Adrenal gland (tissue), 19 donors: ENCODE measurements at regions of chr1 and their contacts with region 1.

Region 1: GRCh38 chr1:8026153-8026975 is at the start of gene ERRFI1:
- DNase-seq: peak; percentile 93 to 97 (median 94)
- H3K4me3 ChIP-seq: peak within 1 kb of the TSS; percentile 31 to 97 (median 56)
- H3K27ac ChIP-seq: peak within 1 kb of the TSS; percentile 16 to 95 (median 84)
- H3K4me1 ChIP-seq: peaks cover 23 to 48% of the 10 kb centered on the region in 2 donors
- H3K27me3 ChIP-seq: no peaks in the 10 kb centered on the region
- CTCF ChIP-seq: peak in 1 of 6 experiments; percentile 15
- POLR2A ChIP-seq: peak; percentile 99 to 100
- total RNA-seq, gene ERRFI1: 16.0 to 71.5 (median 27.4) TPM

Region 2: DNA sequence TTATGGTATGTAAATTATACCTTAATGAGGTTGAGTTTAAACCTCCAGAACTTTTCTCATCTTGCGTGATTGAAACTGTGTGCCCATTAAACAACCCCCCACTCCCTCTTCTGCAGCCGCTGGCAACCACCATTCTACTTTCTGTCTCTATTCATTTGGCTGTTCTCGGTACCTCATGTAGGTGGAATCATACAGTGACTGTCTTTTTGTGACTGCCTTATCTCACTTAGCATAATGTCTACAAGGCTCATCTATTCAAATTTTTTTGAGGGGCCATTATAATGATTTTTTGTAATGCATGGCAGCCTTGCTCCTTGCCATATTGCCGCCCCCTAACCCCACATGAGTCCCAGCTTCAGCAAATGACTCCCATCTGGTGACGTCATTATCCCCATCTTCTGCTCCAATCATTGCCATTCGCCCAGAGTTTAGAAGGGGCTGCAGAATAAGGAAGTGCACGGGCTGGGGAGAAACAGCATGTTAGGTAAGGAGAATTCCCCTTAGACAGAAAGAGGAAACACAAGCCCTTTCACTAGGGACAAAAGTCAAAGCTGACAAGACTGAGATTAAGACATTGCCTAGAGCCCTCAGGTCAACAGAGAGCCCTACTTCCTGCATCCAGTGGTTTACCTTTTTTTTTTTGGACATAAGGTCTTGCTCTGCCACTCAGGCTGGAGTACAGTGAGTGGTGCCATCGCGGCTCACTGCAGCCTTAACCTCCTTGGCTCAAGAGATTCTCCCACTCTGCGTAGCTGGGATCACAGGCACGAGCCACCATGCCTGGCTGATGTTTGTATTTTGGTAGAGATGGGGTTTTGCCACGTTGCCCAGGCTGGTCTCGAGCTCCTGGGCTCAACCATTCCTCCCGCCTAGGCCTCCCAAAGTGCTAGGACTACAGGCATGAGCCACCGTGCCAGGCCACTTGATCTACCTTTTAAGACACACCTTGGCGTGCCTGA is 78.2 kb after region 1 on chr1:
- intact Hi-C with region 1: no loop called
- DNase-seq: no peak
- H3K4me3 ChIP-seq: no peak overlapping the region
- H3K27ac ChIP-seq: no peak overlapping the region
- H3K4me1 ChIP-seq: peaks cover 0 to 7% of the 10 kb centered on the region in 2 donors
- H3K27me3 ChIP-seq: no peaks in the 10 kb centered on the region
- CTCF ChIP-seq: no peak
- POLR2A ChIP-seq: no peak

Region 3: GRCh38 chr1:8121261-8122170 is 95.2 kb after region 1 on chr1:
- intact Hi-C with region 1: loop called in 1 of 2 experiments (anchors 10 kb)
- DNase-seq: peak; percentile 85 to 96 (median 92)
- H3K4me3 ChIP-seq: peak overlapping the region in 1 of 4 donors; percentile 0
- H3K27ac ChIP-seq: peak overlapping the region; percentile 67 to 94 (median 91)
- H3K4me1 ChIP-seq: peaks cover 22 to 24% of the 10 kb centered on the region in 2 donors
- H3K27me3 ChIP-seq: no peaks in the 10 kb centered on the region
- CTCF ChIP-seq: no peak
- POLR2A ChIP-seq: peak in 1 of 2 donors; percentile 62

Region 4: GRCh38 chr1:8211589-8212442 is 185.5 kb after region 1 on chr1:
- intact Hi-C with region 1: loop called in 1 of 2 experiments (anchors 10 kb)
- DNase-seq: peak in 6 of 7 donors; percentile 37 to 70 (median 46)
- H3K4me3 ChIP-seq: no peak overlapping the region
- H3K27ac ChIP-seq: peak overlapping the region in 2 of 5 donors; percentile 48 to 79
- H3K4me1 ChIP-seq: peaks cover 11% of the 10 kb centered on the region in 2 donors
- H3K27me3 ChIP-seq: no peaks in the 10 kb centered on the region
- CTCF ChIP-seq: no peak
- POLR2A ChIP-seq: no peak

Region 5: DNA sequence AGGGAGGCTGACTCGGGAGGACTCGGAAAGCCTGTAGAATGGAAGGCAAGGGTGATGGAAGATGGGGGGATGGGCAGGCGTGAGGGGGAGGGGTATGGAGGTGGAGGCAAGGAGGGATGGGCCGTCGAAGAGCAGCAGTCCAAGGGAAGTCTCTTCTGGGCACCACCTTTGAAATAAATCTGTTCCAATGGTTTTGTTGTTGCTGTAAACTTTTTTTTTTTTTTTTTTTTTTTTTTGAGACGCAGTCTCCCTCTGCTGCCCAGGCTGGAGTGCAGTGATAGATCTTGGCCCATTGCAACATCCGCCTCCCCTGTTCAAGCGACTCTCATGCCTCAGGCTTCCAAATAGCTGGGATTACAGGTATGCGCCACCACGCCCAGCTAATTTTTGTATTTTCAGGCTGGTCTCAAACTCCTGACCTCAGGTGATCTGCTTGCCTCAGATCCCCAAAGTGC is 212.5 kb after region 1 on chr1:
- intact Hi-C with region 1: loop called (anchors 5 to 10 kb)
- DNase-seq: peak in 6 of 7 donors; percentile 52 to 76 (median 63)
- H3K4me3 ChIP-seq: no peak overlapping the region
- H3K27ac ChIP-seq: peak overlapping the region in 3 of 5 donors; percentile 8 to 30 (median 11)
- H3K4me1 ChIP-seq: no peaks in the 10 kb centered on the region
- H3K27me3 ChIP-seq: no peaks in the 10 kb centered on the region
- CTCF ChIP-seq: peak in 4 of 6 experiments; percentile 33 to 48 (median 40)
- POLR2A ChIP-seq: no peak

Region 6: DNA sequence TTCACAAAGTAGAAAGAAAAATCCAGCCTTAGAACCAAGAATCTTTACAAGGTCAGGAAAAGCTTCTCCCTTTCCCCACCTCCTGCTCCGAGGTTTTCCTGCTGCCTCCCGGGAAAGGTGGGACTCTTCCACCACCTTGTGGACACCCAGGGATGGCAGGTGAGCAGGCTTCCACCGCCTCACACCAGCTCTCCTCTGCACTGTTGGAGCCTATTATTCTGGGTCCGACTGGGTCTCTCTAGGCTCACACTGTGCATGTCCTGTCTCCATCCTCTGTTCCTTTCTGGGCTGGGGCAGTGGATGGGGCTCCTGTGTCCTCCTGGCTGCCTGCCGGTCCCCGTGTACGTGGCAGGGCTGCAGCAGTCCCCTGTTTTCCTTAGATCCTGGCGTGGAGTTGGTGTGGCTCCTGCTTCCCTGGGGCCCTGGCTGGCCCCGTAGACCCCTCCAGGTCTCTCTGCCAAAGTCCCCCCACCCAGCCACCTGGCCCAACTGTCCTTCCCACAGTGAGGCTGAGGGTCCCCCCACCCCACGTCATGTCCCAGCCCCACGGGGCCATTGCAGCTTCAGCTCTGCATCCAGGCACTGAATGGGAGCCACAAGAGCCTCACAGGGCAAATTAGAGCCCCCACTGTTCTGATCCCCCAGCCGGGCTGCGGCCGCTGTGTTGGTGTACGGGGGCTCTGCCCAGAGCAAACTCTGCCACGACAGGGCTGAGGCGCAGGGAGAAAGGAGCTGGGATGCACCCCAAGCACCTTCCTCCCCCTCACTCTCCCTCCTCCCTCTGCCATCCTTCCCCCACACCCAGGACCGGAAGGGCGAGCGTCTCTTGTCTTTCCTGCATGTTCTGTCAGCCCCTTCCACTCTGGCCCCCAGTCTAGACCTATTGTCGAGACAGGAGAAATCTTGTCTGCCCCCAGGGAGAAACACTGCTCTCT is 288.2 kb after region 1 on chr1:
- intact Hi-C with region 1: loop called (anchors 5 to 10 kb)
- DNase-seq: peak; percentile 80 to 92 (median 84)
- H3K4me3 ChIP-seq: no peak overlapping the region
- H3K27ac ChIP-seq: no peak overlapping the region
- H3K4me1 ChIP-seq: peaks cover 3 to 15% of the 10 kb centered on the region in 2 donors
- H3K27me3 ChIP-seq: no peaks in the 10 kb centered on the region
- CTCF ChIP-seq: peak; percentile 72 to 97 (median 92)
- POLR2A ChIP-seq: no peak